Lower lobe of right lung (tissue), 2 donors: ENCODE measurements at regions of chr6 and their contacts with region 1.

Region 1: DNA sequence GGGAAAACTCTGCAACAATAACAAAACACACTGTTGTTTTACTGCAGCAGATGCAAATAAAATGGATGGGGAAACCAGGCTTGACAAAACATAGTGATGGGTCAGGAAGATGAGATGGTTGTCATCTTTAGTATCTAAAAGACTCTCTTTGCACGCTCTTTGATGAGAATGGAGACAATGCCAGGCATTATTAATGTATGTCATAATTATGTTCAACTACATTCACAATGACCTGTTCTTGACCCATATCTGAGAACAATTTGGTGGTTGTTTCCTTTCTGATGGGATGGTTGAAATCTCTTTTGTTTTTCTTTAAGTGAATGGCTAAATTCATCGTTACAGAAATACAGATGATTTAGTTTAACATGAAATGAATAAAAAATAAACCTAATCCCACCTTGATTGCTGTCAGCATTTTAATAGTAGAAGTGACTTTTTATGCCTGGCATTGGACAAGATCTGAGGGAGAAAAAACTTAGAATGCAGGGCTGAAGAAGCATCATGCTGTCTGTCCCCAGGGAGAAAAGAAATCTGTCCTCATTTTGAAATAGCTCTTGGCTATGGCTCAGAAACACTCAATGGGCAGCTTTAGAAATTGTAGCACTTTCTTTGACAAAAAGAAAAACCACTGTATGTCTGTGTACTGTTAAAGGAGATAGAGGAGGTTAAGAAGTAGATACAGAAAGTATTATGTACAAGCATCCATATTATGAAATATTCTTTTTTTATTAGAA is 12.4 kb upstream of the GRIK2 start:
- DNase-seq: no peak
- ATAC-seq: no peak
- H3K4me3 ChIP-seq: no peak overlapping the region
- H3K27ac ChIP-seq: no peak overlapping the region
- H3K4me1 ChIP-seq: no peaks in the 10 kb centered on the region
- H3K27me3 ChIP-seq: no peaks in the 10 kb centered on the region
- CTCF ChIP-seq: no peak

Region 2: DNA sequence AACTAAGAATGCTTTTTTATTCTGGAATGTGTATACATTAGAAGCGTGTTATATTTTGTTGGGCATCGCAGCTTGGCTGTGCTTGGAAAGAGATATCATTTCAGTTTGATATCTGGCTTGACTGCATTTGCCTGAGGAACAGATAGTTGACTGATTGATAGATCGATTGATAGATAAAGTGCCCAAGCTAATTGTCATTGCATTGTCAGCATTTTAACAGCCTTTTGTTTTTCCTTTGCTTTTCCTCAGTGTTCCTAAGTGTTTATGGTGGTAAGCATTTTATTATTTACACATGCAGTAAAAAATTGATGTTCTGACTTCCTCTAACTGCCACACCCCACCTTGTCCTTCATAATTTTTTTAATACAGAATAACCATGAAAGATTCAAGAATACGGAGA is 168.4 kb before region 1 on chr6:
- intact Hi-C with region 1: no loop called
- DNase-seq: no peak
- ATAC-seq: no peak
- H3K4me3 ChIP-seq: no peak overlapping the region
- H3K27ac ChIP-seq: no peak overlapping the region
- H3K4me1 ChIP-seq: no peaks in the 10 kb centered on the region
- H3K27me3 ChIP-seq: no peaks in the 10 kb centered on the region
- CTCF ChIP-seq: no peak

Region 3: DNA sequence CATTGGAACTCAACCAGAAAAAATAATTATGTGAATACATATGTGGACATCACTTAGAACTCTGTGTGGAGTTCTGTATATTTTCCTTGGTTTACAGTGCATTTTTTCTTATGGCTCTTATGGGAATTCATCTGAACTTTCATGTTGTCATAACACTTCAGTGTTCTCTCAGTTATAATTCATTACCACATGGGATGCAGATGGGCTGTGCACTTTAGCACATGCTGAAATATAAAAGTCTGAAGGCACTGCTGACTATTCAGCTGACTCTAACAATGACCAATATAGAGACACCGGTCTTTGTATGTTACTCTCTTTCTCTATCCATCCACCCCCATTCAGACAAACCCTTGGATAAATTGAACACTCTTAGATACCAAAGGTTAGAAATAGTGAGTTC is 41.7 kb after region 1 on chr6:
- intact Hi-C with region 1: loop called (anchors 2 kb)
- DNase-seq: no peak
- ATAC-seq: no peak
- H3K4me3 ChIP-seq: no peak overlapping the region
- H3K27ac ChIP-seq: no peak overlapping the region
- H3K4me1 ChIP-seq: no peaks in the 10 kb centered on the region
- H3K27me3 ChIP-seq: no peaks in the 10 kb centered on the region
- CTCF ChIP-seq: no peak